Activated naive CD4-positive, alpha-beta T cell treated with anti-CD3 and anti-CD28 coated beads for 36 hours (primary cell): ENCODE measurements at regions of chr20 and their contacts with region 1.

Region 1: GRCh38 chr20:1802385-1803060 is 92.7 kb upstream of the SIRPA start:
- DNase-seq: peak; percentile 71
- H3K4me3 Mint-ChIP-seq: peak overlapping the region; percentile 64
- H3K27ac Mint-ChIP-seq: no peak overlapping the region
- H3K4me1 Mint-ChIP-seq: peaks cover 8% of the 10 kb centered on the region
- H3K27me3 Mint-ChIP-seq: peaks cover 43% of the 10 kb centered on the region

Region 2: DNA sequence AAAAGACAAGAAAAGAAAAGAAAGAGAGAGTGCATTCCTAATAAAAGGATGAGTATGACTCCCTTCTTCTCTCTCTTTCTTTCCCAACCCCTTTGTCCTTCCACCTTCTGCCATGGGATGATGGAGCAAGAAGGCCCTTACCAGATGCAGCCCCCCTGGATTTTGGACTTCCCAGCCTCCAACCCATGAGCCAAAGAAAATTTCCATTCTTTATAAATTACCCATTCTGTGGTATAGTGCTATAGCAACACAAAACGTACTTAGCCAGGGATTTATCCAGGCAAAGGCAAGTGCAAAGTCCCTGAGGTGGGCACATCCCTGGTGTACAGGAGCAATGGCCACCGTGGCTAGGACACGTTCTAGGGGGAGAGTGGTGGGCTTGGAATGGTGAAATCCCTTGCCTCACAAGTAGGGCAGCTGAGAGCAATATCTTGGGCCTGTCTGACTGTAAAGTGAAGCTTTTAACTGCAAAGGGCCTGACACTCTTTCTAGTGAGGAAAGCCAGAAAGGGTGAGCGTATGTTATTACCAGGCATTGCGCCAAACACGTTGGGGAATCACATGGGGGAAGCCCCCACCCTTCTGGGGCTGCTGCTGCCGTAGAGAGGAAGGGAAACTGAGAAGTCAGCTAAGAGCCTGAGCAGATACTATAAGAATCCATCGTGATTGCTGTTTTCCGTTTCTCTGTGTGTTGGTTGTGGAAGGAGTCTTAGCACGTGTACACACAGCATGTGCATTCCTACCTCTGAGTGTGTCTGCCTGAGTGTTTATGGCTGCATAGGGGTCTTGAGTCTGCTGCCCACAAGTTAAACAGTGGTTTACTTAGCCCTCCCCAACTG is 42.0 kb after region 1 on chr20:
- CTCF ChIA-PET with region 1: no interaction called
- intact Hi-C with region 1: loop called (anchors 5 kb)
- DNase-seq: peak; percentile 90
- H3K4me3 Mint-ChIP-seq: no peak overlapping the region
- H3K27ac Mint-ChIP-seq: peak overlapping the region; percentile 77
- H3K4me1 Mint-ChIP-seq: peaks cover 12% of the 10 kb centered on the region
- H3K27me3 Mint-ChIP-seq: peaks cover 5% of the 10 kb centered on the region

Region 3: GRCh38 chr20:1965520-1966351 is 163.2 kb after region 1 on chr20:
- CTCF ChIA-PET with region 1: interaction called, 3 read pairs
- intact Hi-C with region 1: loop called (anchors 1 kb)
- DNase-seq: peak; percentile 89
- H3K4me3 Mint-ChIP-seq: peak overlapping the region; percentile 54
- H3K27ac Mint-ChIP-seq: peak overlapping the region; percentile 43
- H3K4me1 Mint-ChIP-seq: peaks cover 14% of the 10 kb centered on the region
- H3K27me3 Mint-ChIP-seq: peaks cover 23% of the 10 kb centered on the region

Region 4: DNA sequence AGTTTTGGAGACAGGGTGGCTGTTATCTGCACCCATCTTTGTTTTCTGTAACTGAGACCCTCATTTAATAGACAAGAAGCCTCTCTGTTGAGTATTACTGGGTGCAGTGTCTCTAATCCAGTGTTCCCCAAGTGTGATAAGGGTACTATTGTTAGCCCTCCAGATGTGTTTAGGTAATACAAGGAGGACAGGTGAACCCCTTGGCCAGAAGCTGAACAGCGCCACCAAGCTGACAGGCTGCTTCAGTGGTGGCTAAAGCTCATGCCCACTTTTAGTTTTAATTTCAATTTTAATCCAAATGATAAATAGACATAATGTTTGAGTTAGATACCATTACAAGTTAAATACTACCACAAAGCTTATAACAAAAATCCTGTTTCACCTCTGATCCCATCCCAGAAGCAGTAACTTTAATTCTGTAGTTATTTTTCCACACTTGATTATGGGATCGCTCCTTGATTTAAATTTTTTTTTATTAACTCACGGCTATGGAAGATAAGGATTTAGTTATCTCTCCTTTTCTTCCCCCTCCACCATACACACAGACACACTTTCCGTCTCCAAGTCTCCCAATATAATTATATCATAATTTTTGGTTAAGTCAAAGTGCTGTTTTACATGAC is 290.7 kb after region 1 on chr20:
- CTCF ChIA-PET with region 1: no interaction called
- intact Hi-C with region 1: loop called (anchors 1 kb)
- DNase-seq: peak; percentile 65
- H3K4me3 Mint-ChIP-seq: no peak overlapping the region
- H3K27ac Mint-ChIP-seq: no peak overlapping the region
- H3K4me1 Mint-ChIP-seq: no peaks in the 10 kb centered on the region
- H3K27me3 Mint-ChIP-seq: peaks cover 28% of the 10 kb centered on the region

Region 5: GRCh38 chr20:2349818-2350508 is 547.4 kb after region 1 on chr20:
- CTCF ChIA-PET with region 1: no interaction called
- intact Hi-C with region 1: loop called (anchors 5 kb)
- DNase-seq: no peak
- H3K4me3 Mint-ChIP-seq: no peak overlapping the region
- H3K27ac Mint-ChIP-seq: no peak overlapping the region
- H3K4me1 Mint-ChIP-seq: no peaks in the 10 kb centered on the region
- H3K27me3 Mint-ChIP-seq: peaks cover 13% of the 10 kb centered on the region